GM12878 (cell line): ENCODE measurements at regions of chr7 and their contacts with region 1.

Region 1: GRCh38 chr7:77651573-77652162 is 44.6 kb upstream of the RSBN1L start:
- DNase-seq: no peak
- ATAC-seq: peak; percentile 70
- H3K4me3 ChIP-seq: no peak overlapping the region
- H3K27ac ChIP-seq: no peak overlapping the region
- H3K4me1 ChIP-seq: no peaks in the 10 kb centered on the region
- H3K27me3 ChIP-seq: no peaks in the 10 kb centered on the region
- CTCF ChIP-seq: peak; percentile 59 to 61 (median 60)
- EP300 ChIP-seq: no peak
- POLR2A ChIP-seq: no peak
- RAD21 ChIP-seq: peak; percentile 76

Region 2: DNA sequence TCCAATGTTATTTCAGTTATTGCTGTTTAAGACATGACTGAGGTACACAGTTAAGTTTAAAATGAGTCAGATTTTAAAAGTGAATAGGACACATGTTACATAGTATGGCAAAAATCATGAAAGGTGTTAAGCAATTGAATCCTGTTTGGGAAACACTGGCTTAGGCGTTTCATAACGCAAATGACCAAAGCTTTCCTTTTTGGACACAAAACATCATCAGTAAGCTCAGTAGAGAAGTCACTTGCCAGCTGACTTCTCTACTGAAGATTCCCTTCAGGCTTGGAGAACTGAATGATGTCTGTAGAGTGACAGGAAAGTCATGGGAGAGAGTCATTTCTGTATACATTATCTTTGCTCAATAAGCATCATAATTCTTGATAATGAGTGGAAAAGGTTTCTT is 19.8 kb before region 1 on chr7:
- CTCF ChIA-PET with region 1: interaction called, 17 read pairs
- POLR2A ChIA-PET with region 1: no interaction called
- RAD21 ChIA-PET with region 1: interaction called, 6 read pairs
- SMC1A ChIA-PET with region 1: interaction called, 7 read pairs
- in situ Hi-C with region 1: no loop called
- intact Hi-C with region 1: no loop called
- DNase-seq: no peak
- ATAC-seq: no peak
- H3K4me3 ChIP-seq: no peak overlapping the region
- H3K27ac ChIP-seq: no peak overlapping the region
- H3K4me1 ChIP-seq: no peaks in the 10 kb centered on the region
- H3K27me3 ChIP-seq: no peaks in the 10 kb centered on the region
- CTCF ChIP-seq: no peak
- EP300 ChIP-seq: no peak
- POLR2A ChIP-seq: no peak
- RAD21 ChIP-seq: no peak

Region 3: DNA sequence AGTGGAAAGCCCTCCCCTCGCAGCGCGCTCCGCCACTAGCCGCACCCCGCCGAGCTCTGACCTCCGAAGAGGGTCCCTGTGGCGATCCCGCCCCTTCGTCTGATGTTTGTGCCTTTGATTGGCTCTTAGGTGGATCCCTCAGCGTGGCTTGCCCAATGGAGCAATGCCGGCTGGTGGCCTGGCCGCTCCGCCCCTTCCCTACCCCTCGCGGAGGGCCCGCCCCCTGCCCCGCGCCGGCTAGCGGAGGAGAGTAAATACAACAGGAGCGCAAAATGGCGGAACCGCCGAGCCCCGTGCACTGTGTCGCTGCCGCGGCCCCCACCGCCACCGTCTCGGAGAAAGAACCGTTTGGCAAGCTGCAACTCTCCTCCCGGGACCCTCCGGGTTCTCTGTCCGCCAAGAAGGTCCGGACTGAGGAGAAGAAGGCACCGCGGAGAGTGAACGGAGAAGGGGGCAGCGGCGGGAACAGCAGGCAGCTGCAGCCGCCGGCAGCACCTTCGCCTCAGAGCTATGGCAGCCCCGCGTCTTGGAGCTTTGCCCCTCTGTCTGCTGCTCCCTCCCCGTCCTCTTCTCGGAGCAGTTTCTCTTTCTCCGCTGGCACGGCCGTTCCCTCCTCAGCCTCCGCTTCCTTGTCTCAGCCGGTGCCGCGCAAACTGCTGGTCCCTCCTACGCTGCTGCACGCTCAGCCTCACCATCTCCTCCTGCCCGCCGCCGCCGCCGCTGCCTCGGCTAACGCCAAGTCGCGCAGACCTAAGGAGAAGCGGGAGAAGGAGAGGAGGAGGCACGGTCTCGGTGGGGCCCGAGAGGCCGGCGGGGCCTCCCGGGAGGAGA is 44.7 kb after region 1 on chr7 and contains the start of gene RSBN1L:
- CTCF ChIA-PET with region 1: interaction called, 29 read pairs
- POLR2A ChIA-PET with region 1: interaction called, 5 read pairs
- RAD21 ChIA-PET with region 1: interaction called, 3 read pairs
- SMC1A ChIA-PET with region 1: interaction called, 8 read pairs
- in situ Hi-C with region 1: no loop called
- intact Hi-C with region 1: no loop called
- DNase-seq: peak; percentile 93
- ATAC-seq: peak; percentile 95
- H3K4me3 ChIP-seq: peak within 1 kb of the TSS; percentile 100
- H3K27ac ChIP-seq: peak within 1 kb of the TSS; percentile 95
- H3K4me1 ChIP-seq: no peaks in the 10 kb centered on the region
- H3K27me3 ChIP-seq: no peaks in the 10 kb centered on the region
- CTCF ChIP-seq: peak; percentile 14 to 51 (median 37); a peak in 5 of 6 replicates
- EP300 ChIP-seq: no peak
- POLR2A ChIP-seq: peak; percentile 91
- RAD21 ChIP-seq: no peak
- polyA plus RNA-seq, gene RSBN1L: 4.6 to 6.9 TPM

Region 4: GRCh38 chr7:77736991-77737390 is 85.3 kb after region 1 on chr7:
- CTCF ChIA-PET with region 1: interaction called, 3 read pairs
- POLR2A ChIA-PET with region 1: interaction called, 10 read pairs
- RAD21 ChIA-PET with region 1: no interaction called
- SMC1A ChIA-PET with region 1: interaction called, 3 read pairs
- in situ Hi-C with region 1: no loop called
- intact Hi-C with region 1: no loop called
- DNase-seq: no peak
- ATAC-seq: no peak
- H3K4me3 ChIP-seq: no peak overlapping the region
- H3K27ac ChIP-seq: no peak overlapping the region
- H3K4me1 ChIP-seq: no peaks in the 10 kb centered on the region
- H3K27me3 ChIP-seq: no peaks in the 10 kb centered on the region
- CTCF ChIP-seq: no peak
- EP300 ChIP-seq: no peak
- POLR2A ChIP-seq: no peak
- RAD21 ChIP-seq: no peak

Region 5: DNA sequence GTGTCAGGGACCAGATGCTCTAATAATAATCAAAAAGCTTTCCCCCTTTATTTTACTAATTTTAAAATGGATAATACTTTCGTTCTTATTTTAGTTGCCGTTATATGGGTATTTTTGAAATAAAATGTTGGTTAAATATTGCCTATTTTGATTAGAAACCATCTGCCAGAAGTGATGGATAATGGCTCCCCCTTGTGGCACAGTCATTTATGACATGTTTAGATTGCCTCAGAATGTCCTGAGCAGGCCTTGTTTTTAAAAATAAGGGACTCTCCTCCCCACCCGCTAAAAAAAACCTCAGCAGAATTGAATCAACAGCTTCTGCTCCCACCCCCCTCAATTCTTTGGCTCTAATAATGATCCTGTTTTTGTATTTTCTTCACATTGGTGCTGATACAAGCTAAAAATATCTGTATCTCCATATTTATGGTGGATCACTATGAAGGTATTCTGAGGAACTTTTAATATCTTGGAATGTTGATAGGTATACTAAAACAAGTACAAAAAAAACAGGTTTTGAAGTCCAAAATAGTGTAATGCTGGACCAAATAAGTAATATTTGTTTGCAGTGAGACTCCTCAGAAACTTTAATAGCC is 107.7 kb after region 1 on chr7:
- CTCF ChIA-PET with region 1: interaction called, 225 read pairs
- POLR2A ChIA-PET with region 1: no interaction called
- RAD21 ChIA-PET with region 1: interaction called, 58 read pairs
- SMC1A ChIA-PET with region 1: interaction called, 75 read pairs
- in situ Hi-C with region 1: loop called (anchors 5 kb)
- intact Hi-C with region 1: no loop called
- DNase-seq: peak; percentile 38
- ATAC-seq: peak; percentile 83
- H3K4me3 ChIP-seq: no peak overlapping the region
- H3K27ac ChIP-seq: no peak overlapping the region
- H3K4me1 ChIP-seq: peaks cover 3% of the 10 kb centered on the region; the same call in 1 of the 2 replicates
- H3K27me3 ChIP-seq: no peaks in the 10 kb centered on the region
- CTCF ChIP-seq: peak; percentile 61 to 79 (median 78)
- EP300 ChIP-seq: no peak
- POLR2A ChIP-seq: no peak
- RAD21 ChIP-seq: peak; percentile 96

Region 6: GRCh38 chr7:77933394-77933793 is 281.7 kb after region 1 on chr7:
- CTCF ChIA-PET with region 1: interaction called, 24 read pairs
- POLR2A ChIA-PET with region 1: no interaction called
- RAD21 ChIA-PET with region 1: interaction called, 9 read pairs
- SMC1A ChIA-PET with region 1: interaction called, 17 read pairs
- in situ Hi-C with region 1: loop called (anchors 10 kb)
- intact Hi-C with region 1: loop called (anchors 5 kb)
- DNase-seq: no peak
- ATAC-seq: no peak
- H3K4me3 ChIP-seq: no peak overlapping the region
- H3K27ac ChIP-seq: no peak overlapping the region
- H3K4me1 ChIP-seq: no peaks in the 10 kb centered on the region
- H3K27me3 ChIP-seq: no peaks in the 10 kb centered on the region
- CTCF ChIP-seq: no peak
- EP300 ChIP-seq: no peak
- POLR2A ChIP-seq: no peak
- RAD21 ChIP-seq: no peak

Region 7: DNA sequence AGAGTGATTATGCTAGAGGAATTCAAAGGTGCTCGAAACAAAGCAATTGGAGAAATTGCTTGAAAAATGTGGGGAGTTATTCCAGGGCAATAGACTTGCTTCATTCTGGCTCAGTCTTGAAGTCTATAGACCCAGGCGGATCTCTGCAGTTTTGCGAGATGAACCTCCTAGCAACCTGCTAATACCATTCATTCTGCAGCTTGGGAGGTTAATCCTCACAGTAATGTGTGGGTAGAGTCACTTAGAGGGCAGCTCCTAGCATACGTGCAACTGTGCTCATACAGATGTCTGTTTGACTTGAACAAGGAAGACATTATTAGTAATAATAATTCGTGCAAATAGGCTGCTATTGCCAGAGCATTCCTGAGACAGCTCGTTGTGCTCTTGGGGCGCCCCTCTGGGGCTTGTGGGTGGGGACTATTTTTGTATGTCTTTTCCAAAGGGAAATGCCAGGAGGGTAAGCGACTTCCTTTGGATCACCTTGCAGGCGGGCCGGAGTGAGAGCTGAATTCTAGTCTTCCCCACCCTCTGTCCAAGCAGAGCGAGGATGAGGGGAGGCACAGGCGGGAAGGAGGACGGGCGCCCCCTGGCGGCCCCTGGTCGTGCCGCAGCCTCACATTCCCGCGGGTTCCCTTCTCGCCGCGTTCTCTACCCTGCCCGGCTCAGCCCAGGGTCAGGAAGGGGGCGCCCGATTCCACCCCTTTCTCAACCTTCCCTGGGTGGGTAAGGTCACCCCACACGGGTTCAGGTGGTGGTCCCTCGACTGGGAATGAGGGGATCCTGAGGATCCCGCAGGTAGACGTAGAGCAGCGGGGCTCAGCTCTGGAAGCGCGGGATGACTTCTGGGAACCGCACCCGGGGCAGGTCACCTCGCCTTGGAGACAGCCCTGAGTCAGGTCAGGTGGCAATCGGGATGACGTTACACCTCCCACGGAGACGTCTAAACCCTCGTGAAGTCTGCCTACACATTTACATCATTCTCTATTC is 388.4 kb after region 1 on chr7:
- CTCF ChIA-PET with region 1: interaction called, 20 read pairs
- POLR2A ChIA-PET with region 1: no interaction called
- RAD21 ChIA-PET with region 1: interaction called, 3 read pairs
- SMC1A ChIA-PET with region 1: interaction called, 3 read pairs
- in situ Hi-C with region 1: no loop called
- intact Hi-C with region 1: loop called (anchors 5 kb)
- DNase-seq: no peak
- ATAC-seq: peak; percentile 98
- H3K4me3 ChIP-seq: no peak overlapping the region
- H3K27ac ChIP-seq: no peak overlapping the region
- H3K4me1 ChIP-seq: no peaks in the 10 kb centered on the region
- H3K27me3 ChIP-seq: no peaks in the 10 kb centered on the region; a peak in 2 of 4 replicates
- CTCF ChIP-seq: peak; percentile 81 to 92 (median 85)
- EP300 ChIP-seq: no peak
- POLR2A ChIP-seq: no peak
- RAD21 ChIP-seq: peak; percentile 67